Right ventricle myocardium superior (tissue), 1 donor: ENCODE measurements at regions of chr20 and their contacts with region 1.

Region 1: GRCh38 chr20:23441850-23442313 is 2.4 kb downstream of the CSTL1 start:
- DNase-seq: peak; percentile 57
- ATAC-seq: peak; percentile 87

Region 2: GRCh38 chr20:23606652-23607049 is 164.8 kb after region 1 on chr20:
- intact Hi-C with region 1: loop called (anchors 10 kb)
- DNase-seq: peak; percentile 90
- ATAC-seq: peak; percentile 97